Caco-2 (cell line): ENCODE measurements at regions of chr2 and their contacts with region 1.

Region 1: GRCh38 chr2:219689676-219690628 is 62.5 kb downstream of the SLC4A3 start:
- DNase-seq: peak in 1 of 2 experiments; percentile 71
- H3K4me3 ChIP-seq: no peak overlapping the region
- H3K4me3 Mint-ChIP-seq: no peak overlapping the region
- H3K27ac Mint-ChIP-seq: no peak overlapping the region
- H3K4me1 ChIP-seq: peaks cover 48% of the 10 kb centered on the region
- H3K4me1 Mint-ChIP-seq: peaks cover 21% of the 10 kb centered on the region
- H3K27me3 ChIP-seq: no peaks in the 10 kb centered on the region
- H3K27me3 Mint-ChIP-seq: peaks cover 7% of the 10 kb centered on the region
- CTCF ChIP-seq: peak; percentile 66 to 86

Region 2: GRCh38 chr2:219619235-219619634 is 70.7 kb before region 1 on chr2:
- CTCF ChIA-PET with region 1: no interaction called
- POLR2A ChIA-PET with region 1: no interaction called
- intact Hi-C with region 1: loop called (anchors 1 kb)
- DNase-seq: no peak
- H3K4me3 ChIP-seq: no peak overlapping the region
- H3K4me3 Mint-ChIP-seq: no peak overlapping the region
- H3K27ac Mint-ChIP-seq: no peak overlapping the region
- H3K4me1 ChIP-seq: no peaks in the 10 kb centered on the region
- H3K4me1 Mint-ChIP-seq: no peaks in the 10 kb centered on the region
- H3K27me3 ChIP-seq: no peaks in the 10 kb centered on the region
- H3K27me3 Mint-ChIP-seq: no peaks in the 10 kb centered on the region
- CTCF ChIP-seq: peak in 1 of 2 experiments; percentile 24

Region 3: DNA sequence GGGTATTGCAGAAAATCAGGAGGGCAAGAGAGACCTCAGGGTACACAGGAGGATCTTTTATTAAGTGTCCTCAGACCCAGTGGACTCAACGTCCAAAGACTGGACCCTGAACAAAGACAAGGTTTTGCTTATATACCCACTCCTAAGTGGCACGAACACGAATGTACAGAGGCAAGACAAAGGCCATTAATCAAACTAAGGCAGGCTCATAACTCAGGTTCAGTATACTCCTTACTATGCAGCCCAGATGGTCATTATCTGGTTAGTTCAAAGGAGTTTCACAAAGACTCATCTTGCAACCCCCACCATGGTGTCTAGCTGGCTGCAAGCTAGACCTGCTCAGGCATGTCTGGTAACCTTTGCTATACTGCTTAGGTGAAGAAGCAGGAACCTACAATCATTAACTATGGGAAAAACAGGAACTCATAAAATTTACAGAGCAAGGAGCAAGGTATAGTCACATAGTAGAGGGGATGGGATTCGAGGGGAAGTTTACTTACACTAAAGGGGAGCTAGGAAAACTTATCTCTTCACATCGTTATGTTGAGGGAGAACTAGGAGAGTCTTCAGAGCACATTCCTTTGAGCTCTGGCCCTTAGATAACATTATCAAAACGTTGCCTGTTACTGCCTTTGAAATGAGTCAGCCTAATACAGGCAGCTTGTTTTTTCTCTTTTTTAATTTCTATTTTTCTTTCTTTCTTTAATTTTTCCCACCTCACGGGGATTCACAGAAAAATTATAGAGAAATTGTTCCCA is 28.6 kb before region 1 on chr2:
- CTCF ChIA-PET with region 1: interaction called, 3 read pairs
- POLR2A ChIA-PET with region 1: interaction called, 10 read pairs
- intact Hi-C with region 1: loop called (anchors 1 kb)
- DNase-seq: peak; percentile 66 to 87
- H3K4me3 ChIP-seq: no peak overlapping the region
- H3K4me3 Mint-ChIP-seq: peak overlapping the region; percentile 20
- H3K27ac Mint-ChIP-seq: peak overlapping the region; percentile 76
- H3K4me1 ChIP-seq: peaks cover 43% of the 10 kb centered on the region
- H3K4me1 Mint-ChIP-seq: peaks cover 19% of the 10 kb centered on the region
- H3K27me3 ChIP-seq: no peaks in the 10 kb centered on the region
- H3K27me3 Mint-ChIP-seq: no peaks in the 10 kb centered on the region
- CTCF ChIP-seq: no peak

Region 4: GRCh38 chr2:220043155-220043989 is 353.4 kb after region 1 on chr2:
- CTCF ChIA-PET with region 1: no interaction called
- POLR2A ChIA-PET with region 1: no interaction called
- intact Hi-C with region 1: no loop called
- DNase-seq: no peak
- H3K4me3 ChIP-seq: no peak overlapping the region
- H3K4me3 Mint-ChIP-seq: no peak overlapping the region
- H3K27ac Mint-ChIP-seq: no peak overlapping the region
- H3K4me1 ChIP-seq: no peaks in the 10 kb centered on the region
- H3K4me1 Mint-ChIP-seq: no peaks in the 10 kb centered on the region
- H3K27me3 ChIP-seq: peaks cover 2% of the 10 kb centered on the region; the same call in 1 of the 2 replicates
- H3K27me3 Mint-ChIP-seq: peaks cover 8% of the 10 kb centered on the region
- CTCF ChIP-seq: no peak